AG04449 (cell line): ENCODE measurements at regions of chr17 and their contacts with region 1.

Region 1: GRCh38 chr17:78993241-78993956 is 13.7 kb upstream of the LGALS3BP start:
- DNase-seq: no peak
- H3K4me3 ChIP-seq: no peak overlapping the region
- CTCF ChIP-seq: peak; percentile 77

Region 2: DNA sequence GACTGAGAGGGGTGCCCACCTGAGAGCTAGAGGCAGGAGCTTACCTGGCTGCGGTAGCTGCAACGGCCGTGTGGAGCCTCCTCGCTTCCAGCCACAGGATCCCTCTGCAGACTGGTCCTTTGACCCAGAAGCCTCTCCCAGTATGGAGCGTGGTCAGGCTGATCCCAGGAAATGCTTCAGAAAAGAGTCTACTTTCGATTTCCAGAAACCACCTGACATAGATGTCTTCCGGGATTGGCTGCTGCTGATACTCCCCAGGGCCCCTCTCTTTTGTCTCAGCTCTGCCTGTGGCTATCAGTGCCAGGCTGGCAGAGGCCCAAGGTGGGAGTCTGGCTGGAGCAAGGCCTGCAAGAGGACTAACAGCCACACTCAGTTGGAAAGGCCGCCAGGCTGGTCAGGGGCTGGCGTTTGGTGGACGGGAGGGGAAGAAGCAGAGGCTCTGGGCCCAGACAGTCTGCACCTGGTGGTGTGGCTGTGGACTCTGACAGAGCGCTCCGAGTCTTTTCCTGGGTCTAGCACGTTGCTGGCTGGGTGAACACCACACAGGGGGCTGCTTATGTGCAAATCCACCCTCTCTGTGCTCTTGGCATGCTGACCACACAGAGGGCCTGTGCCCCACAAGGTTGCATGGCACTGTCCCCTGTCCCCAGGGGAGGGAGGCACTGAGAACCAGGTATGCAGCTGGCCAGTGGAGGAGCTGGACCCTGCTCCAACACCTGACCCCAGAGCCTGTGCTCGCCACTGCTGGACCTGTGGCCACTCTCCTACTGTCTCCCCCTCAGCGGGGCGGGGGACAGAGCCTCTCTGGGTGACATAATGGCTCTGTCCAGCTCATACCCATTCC is 13.4 kb before region 1 on chr17 and contains the start of gene LGALS3BP:
- CTCF ChIA-PET with region 1: interaction called, 28 read pairs
- POLR2A ChIA-PET with region 1: no interaction called
- DNase-seq: no peak
- H3K4me3 ChIP-seq: peak within 1 kb of the TSS; percentile 52
- CTCF ChIP-seq: no peak

Region 3: DNA sequence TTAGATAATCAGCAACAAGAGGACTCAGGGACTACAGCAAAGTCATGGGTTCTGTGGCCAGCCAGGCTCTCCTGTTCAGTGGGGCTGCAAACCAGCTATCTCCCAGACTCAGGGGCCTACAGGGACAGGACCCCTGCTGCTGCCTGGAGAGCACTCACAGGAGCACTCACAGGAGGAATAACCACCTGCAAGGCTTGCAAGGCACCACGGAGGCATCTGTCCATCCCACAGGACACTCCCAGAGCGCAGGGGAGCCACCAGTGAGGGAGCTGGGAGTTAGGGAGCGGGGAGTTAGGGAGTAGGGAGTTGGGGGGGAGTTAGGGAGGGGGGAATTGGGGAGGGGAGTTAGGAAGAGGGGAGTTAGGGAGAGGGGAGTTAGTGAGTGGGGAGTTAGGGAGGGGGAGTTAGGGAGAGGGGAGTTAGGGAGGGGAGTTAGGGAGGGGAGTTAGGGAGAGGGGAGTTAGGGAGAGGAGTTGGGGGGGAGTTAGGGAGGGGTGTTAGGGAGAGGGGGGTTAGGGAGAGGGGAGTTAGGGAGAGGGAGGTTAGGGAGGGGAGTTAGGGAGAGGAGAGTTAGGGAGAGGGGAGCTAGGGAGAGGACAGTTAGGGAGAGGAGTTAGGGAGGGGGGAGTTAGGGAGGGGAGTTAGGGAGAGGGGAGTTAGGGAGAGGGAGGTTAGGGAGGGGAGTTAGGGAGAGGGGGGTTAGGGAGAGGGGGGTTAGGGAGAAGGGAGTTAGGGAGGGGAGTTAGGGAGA is 10.4 kb after region 1 on chr17:
- CTCF ChIA-PET with region 1: interaction called, 25 read pairs
- POLR2A ChIA-PET with region 1: no interaction called
- DNase-seq: no peak
- H3K4me3 ChIP-seq: no peak overlapping the region
- CTCF ChIP-seq: no peak

Region 4: GRCh38 chr17:79087428-79088143 is 94.2 kb after region 1 on chr17:
- CTCF ChIA-PET with region 1: no interaction called
- POLR2A ChIA-PET with region 1: no interaction called
- DNase-seq: no peak
- H3K4me3 ChIP-seq: no peak overlapping the region
- CTCF ChIP-seq: peak; percentile 93